ENCODE measurements at regions of chr20 and their contacts with region 1.

Region 1: GRCh38 chr20:5211803-5212714 is 85.3 kb downstream of the CDS2 start:
- DNase-seq: no peak
- ATAC-seq: no peak
- H3K4me3 ChIP-seq: no peak overlapping the region
- H3K27ac ChIP-seq: no peak overlapping the region
- H3K4me1 ChIP-seq: no peaks in the 10 kb centered on the region
- H3K27me3 ChIP-seq: no peaks in the 10 kb centered on the region
- CTCF ChIP-seq: no peak

Region 2: DNA sequence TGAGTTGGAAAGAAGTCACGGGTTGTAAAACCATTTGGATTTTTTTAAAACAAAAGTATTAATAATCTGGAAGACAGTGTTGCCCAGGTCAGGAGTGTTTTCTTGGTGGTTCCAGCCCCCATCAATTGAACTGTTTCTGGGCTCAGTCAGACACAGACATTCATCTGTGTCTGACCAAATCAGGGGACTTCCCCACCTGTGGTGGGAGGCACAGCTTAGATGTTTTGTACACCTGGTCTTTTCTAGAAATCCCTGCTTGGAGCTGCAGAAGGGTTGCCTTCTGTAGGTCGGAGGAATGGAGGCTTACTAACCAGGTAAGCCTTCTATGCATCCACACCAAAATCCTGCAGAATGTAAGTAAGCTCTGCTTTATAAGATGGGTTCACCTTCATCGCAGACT is 21.6 kb before region 1 on chr20:
- CTCF ChIA-PET with region 1: no interaction called
- POLR2A ChIA-PET with region 1: no interaction called
- in situ Hi-C with region 1: no loop called
- intact Hi-C with region 1: no loop called
- DNase-seq: no peak
- ATAC-seq: no peak
- H3K4me3 ChIP-seq: no peak overlapping the region
- H3K27ac ChIP-seq: no peak overlapping the region
- H3K4me1 ChIP-seq: no peaks in the 10 kb centered on the region
- H3K27me3 ChIP-seq: no peaks in the 10 kb centered on the region
- CTCF ChIP-seq: no peak

Region 3: GRCh38 chr20:5222919-5223634 is 11.0 kb after region 1 on chr20:
- CTCF ChIA-PET with region 1: interaction called, 13 read pairs
- POLR2A ChIA-PET with region 1: no interaction called
- in situ Hi-C with region 1: no loop called
- intact Hi-C with region 1: no loop called
- DNase-seq: peak; percentile 54
- ATAC-seq: peak; percentile 84
- H3K4me3 ChIP-seq: 0 out of 4 replicates have a peak overlapping the region, but pooled peaks of 1 of the 2 experiments have one; percentile 11
- H3K27ac ChIP-seq: no peak overlapping the region
- H3K4me1 ChIP-seq: peaks cover 5% of the 10 kb centered on the region
- H3K27me3 ChIP-seq: peaks cover 2% of the 10 kb centered on the region; the same call in 1 of the 2 replicates
- CTCF ChIP-seq: peak; percentile 94

Region 4: GRCh38 chr20:5268449-5268848 is 56.4 kb after region 1 on chr20:
- CTCF ChIA-PET with region 1: no interaction called
- POLR2A ChIA-PET with region 1: no interaction called
- in situ Hi-C with region 1: no loop called
- intact Hi-C with region 1: no loop called
- DNase-seq: no peak
- ATAC-seq: no peak
- H3K4me3 ChIP-seq: no peak overlapping the region
- H3K27ac ChIP-seq: no peak overlapping the region
- H3K4me1 ChIP-seq: no peaks in the 10 kb centered on the region
- H3K27me3 ChIP-seq: peaks cover 27% of the 10 kb centered on the region
- CTCF ChIP-seq: no peak